AG04450 (cell line): ENCODE measurements at regions of chr15 and their contacts with region 1.

Region 1: DNA sequence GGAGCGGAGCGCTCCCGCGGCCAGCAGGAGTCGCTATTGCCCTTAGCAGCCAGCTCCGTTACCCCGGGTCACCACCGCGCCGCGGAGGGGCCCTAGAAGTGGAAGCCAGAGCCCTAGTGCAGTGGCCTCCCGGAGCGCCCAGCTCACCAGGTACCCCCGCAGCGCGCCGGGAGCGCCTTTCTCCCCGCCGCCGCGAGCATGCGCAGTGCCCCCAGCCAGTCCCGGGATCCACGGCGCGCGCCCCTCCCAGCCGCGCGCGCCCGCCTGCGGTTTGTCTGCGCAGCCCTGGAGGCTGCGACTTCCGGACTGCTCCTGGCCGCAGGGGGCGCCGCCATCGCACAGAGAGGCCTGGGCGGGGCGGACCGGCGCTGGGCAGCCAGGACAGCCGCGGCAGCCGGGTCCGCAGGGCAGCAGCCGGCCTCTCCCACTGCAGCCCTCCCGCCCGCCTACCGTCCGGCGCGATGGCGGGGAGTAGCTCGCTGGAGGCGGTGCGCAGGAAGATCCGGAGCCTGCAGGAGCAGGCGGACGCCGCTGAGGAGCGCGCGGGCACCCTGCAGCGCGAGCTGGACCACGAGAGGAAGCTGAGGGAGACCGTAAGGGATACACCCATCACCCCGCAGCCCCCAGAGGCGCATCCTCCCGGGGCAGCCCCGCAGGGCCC is 5.7 kb downstream of the TPM1 start:
- DNase-seq: peak; percentile 88
- H3K4me3 ChIP-seq: peak overlapping the region; percentile 94
- H3K27ac ChIP-seq: peak overlapping the region; percentile 84
- H3K27me3 ChIP-seq: no peaks in the 10 kb centered on the region
- CTCF ChIP-seq: peak; percentile 94

Region 2: DNA sequence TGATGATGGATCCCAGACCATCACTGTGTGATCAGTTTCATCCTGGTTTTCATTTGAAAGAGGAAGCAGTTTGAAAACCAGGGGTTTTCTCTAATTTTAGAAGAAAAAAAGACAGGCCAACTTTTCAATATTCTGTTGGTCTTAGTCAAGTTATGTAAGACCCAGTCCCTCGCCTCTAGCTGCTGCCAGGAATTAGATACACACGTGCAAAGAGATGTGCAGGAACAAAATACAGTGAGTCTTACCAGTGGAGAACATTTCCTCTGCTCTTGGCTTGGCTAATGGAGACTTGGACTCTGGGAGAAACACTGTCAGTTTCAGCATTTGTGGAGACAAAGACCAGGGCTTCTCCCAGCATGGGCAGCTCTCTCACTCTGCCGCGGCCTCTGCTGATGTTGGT is 668.2 kb before region 1 on chr15:
- CTCF ChIA-PET with region 1: no interaction called
- POLR2A ChIA-PET with region 1: no interaction called
- DNase-seq: no peak
- H3K4me3 ChIP-seq: no peak overlapping the region
- H3K27ac ChIP-seq: no peak overlapping the region
- H3K27me3 ChIP-seq: peaks cover 17% of the 10 kb centered on the region
- CTCF ChIP-seq: no peak

Region 3: GRCh38 chr15:62770752-62771151 is 277.5 kb before region 1 on chr15:
- CTCF ChIA-PET with region 1: interaction called, 3 read pairs
- POLR2A ChIA-PET with region 1: interaction called, 10 read pairs
- DNase-seq: peak; percentile 54
- H3K4me3 ChIP-seq: no peak overlapping the region
- H3K27ac ChIP-seq: no peak overlapping the region
- H3K27me3 ChIP-seq: no peaks in the 10 kb centered on the region
- CTCF ChIP-seq: no peak

Region 4: DNA sequence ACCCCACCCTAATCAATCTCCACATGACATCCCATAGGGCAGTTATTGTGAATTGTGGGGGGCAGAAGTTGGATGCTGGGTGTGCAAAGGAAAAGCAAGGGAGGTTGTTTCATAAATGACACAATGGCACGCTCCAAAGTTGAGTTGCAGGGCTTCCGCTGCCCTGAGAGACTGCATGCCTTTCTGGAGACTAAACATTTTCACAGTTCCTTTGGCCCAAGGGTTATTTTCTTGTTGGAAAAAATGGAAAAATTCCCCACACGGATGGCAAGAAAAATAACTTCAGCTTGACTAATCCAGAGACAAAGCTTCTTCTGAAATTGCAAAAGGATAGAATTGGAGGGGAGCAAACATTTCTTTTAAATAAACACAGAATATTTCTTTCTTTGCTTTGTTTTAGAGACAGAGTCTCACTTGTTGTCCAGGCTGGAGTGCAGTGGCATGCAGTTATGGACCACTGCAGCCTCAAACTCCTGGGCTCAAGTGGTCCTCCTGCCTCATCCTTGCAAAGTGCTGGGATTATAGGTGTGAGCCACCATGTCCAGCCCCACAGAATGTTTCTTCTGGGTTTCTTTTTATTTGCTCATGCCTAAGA is 24.8 kb before region 1 on chr15:
- CTCF ChIA-PET with region 1: interaction called, 11 read pairs
- POLR2A ChIA-PET with region 1: interaction called, 10 read pairs
- DNase-seq: no peak
- H3K4me3 ChIP-seq: no peak overlapping the region
- H3K27ac ChIP-seq: peak overlapping the region; percentile 57
- H3K27me3 ChIP-seq: no peaks in the 10 kb centered on the region
- CTCF ChIP-seq: no peak

Region 5: DNA sequence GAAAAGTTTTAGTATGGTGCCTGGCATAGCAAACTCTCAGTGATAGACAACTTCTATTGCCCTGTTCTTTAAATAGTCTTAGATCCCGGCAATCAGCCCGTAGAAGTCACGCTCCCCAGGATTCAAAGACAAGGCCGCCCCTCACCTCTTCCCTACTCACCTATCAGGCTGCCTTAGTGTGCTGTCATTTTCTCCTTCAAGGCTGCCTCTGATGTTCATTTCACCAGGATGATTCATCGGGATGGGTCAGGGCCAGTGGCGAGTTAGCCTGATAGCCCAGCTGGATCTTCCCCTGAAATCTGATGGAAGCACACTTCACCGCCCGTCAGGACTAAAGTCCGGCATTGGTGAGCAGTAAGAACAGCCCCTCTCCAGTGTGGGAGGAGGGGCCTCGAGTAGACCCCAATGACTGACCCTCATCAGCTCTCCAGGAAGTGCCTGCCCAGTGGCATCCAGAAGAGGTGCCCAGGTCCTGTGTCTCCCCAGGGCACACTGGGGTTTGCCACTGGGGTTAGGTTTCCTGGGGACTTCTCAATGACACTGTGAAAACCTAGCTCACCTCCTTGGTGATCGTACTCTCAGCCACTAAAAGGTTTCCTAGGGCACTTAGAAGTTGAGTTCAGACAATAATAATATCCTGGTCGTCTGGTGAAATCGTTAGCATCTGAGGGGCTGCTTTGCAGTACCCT is 31.8 kb after region 1 on chr15:
- CTCF ChIA-PET with region 1: interaction called, 16 read pairs
- POLR2A ChIA-PET with region 1: no interaction called
- DNase-seq: no peak
- H3K4me3 ChIP-seq: no peak overlapping the region
- H3K27ac ChIP-seq: no peak overlapping the region
- H3K27me3 ChIP-seq: no peaks in the 10 kb centered on the region
- CTCF ChIP-seq: no peak

Region 6: DNA sequence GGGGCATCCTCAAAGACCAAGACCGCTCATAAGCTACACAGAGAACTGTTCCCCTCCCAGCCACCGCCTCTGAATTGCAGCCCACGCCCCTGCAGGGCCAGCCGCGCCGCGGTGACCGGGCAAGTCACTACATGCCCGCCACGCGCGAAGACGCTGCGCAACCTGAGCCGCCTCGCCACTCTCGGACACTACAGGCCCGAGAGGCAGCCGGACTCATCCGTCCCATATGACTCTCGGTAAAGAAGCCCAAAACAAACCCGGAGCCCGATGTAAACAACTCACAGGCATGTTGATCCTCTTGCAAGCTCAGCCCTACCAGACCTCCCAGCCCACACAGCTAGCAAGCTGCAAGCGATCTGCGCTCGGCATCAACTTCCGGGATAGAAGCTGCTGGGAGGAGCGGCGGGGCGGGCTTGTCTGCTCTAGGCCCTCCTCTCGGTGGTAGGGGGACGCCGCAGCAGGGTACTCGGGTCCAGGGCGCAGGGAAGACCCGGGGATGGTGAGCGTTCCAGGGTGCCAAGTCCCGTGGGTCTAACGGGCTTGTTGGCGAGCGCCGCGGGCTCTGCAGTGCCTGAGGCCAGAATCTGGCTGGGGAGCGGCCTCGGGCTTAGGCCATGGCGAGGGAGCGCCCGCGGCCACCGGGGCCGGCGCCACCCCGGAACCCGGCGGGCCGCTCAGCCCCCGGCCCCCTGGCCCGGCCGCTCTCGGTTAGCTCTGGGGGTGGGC is 109.0 kb after region 1 on chr15 and contains the start of gene RPS27L:
- CTCF ChIA-PET with region 1: interaction called, 3 read pairs
- POLR2A ChIA-PET with region 1: interaction called, 14 read pairs
- DNase-seq: peak; percentile 94
- H3K4me3 ChIP-seq: peak within 1 kb of the TSS; percentile 88
- H3K27ac ChIP-seq: peak within 1 kb of the TSS; percentile 98
- H3K27me3 ChIP-seq: no peaks in the 10 kb centered on the region
- CTCF ChIP-seq: no peak
- polyA plus RNA-seq, gene RPS27L: 501 and 610 TPM in 2 replicates

Region 7: GRCh38 chr15:63322541-63322940 is 274.3 kb after region 1 on chr15:
- CTCF ChIA-PET with region 1: no interaction called
- POLR2A ChIA-PET with region 1: no interaction called
- DNase-seq: no peak
- H3K4me3 ChIP-seq: no peak overlapping the region
- H3K27ac ChIP-seq: no peak overlapping the region
- H3K27me3 ChIP-seq: no peaks in the 10 kb centered on the region
- CTCF ChIP-seq: no peak

Region 8: GRCh38 chr15:63449731-63450130 is 401.5 kb after region 1 on chr15:
- CTCF ChIA-PET with region 1: no interaction called
- POLR2A ChIA-PET with region 1: no interaction called
- DNase-seq: no peak
- H3K4me3 ChIP-seq: no peak overlapping the region
- H3K27ac ChIP-seq: no peak overlapping the region
- H3K27me3 ChIP-seq: peaks cover 8% of the 10 kb centered on the region
- CTCF ChIP-seq: no peak